ENCODE measurements at regions of chr3 and their contacts with region 1.

Region 1: DNA sequence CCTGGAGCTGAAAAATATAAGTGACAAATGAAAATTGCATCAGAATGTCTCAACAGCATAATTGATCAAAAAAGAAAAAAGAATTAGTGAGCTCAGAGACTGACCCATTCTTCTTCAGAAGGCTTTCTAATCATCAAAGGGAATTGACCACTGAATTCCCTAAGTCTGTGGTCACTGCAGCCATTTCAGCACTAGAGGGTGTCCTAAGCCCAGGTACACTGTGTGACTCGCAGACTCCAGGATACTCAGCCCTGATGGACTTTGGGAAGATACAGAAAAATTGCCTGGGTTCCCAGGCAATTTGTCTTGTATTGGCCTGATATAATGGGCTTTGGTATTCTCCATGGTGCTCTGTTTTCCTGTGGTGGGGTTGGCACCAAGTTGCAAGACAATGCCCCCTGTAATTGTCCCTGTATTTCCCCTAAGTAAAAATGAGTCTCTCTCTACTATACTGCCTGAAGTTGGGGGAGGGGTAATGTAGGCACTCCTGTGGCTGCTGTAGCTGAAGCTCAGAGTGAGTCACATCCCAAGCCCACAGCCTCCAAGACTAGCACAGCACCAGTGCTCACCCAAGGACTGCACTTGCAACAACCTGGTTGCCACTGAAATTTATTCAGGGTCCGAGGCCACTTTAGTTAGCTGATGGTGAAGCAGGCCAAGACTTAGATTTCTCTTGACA is 256.0 kb upstream of the STAC start:
- DNase-seq: peak; percentile 39 to 67
- ATAC-seq: peak; percentile 91 to 97
- H3K4me3 ChIP-seq: no peak overlapping the region
- H3K27ac ChIP-seq: 0 out of 6 replicates have a peak overlapping the region, but pooled peaks of 1 of the 2 experiments have one; percentile 26
- H3K4me1 ChIP-seq: no peaks in the 10 kb centered on the region
- CTCF ChIP-seq: peak; percentile 66
- EP300 ChIP-seq: no peak
- POLR2A ChIP-seq: no peak
- RAD21 ChIP-seq: peak; percentile 87

Region 2: DNA sequence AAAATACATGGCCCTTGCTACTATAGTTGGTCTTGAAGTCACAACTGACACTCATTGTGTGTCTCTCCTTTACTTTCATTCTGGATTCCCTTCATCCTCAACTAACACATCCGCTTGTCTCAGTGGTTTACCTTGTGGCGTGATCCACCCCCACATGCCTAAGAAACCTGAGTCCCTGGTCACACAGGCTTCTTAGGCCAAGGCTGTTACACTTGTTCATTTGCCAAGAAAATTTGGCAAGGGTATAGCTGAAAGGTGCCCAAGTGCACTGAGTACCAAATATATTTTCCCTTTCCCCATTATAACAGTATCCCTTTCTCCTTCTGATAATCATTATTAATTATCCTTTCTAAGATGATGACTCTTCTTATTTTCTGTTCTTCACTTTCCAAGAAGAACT is 48.4 kb after region 1 on chr3:
- CTCF ChIA-PET with region 1: no interaction called
- POLR2A ChIA-PET with region 1: no interaction called
- DNase-seq: no peak
- ATAC-seq: no peak
- H3K4me3 ChIP-seq: no peak overlapping the region
- H3K27ac ChIP-seq: no peak overlapping the region
- H3K4me1 ChIP-seq: no peaks in the 10 kb centered on the region
- CTCF ChIP-seq: no peak
- EP300 ChIP-seq: no peak
- POLR2A ChIP-seq: no peak
- RAD21 ChIP-seq: no peak

Region 3: GRCh38 chr3:36700537-36701248 is 576.4 kb after region 1 on chr3:
- CTCF ChIA-PET with region 1: interaction called, 20 read pairs
- POLR2A ChIA-PET with region 1: no interaction called
- DNase-seq: peak; percentile 47 to 72
- ATAC-seq: peak; percentile 87 to 93
- H3K4me3 ChIP-seq: no peak overlapping the region
- H3K27ac ChIP-seq: peak overlapping the region in 1 of 2 experiments; percentile 49; a peak in 1 of 6 replicates
- H3K4me1 ChIP-seq: peaks cover 13% of the 10 kb centered on the region
- CTCF ChIP-seq: peak; percentile 93
- EP300 ChIP-seq: no peak
- POLR2A ChIP-seq: no peak
- RAD21 ChIP-seq: peak; percentile 99

Region 4: GRCh38 chr3:36707623-36708409 is 583.6 kb after region 1 on chr3:
- CTCF ChIA-PET with region 1: interaction called, 14 read pairs
- POLR2A ChIA-PET with region 1: no interaction called
- DNase-seq: peak; percentile 90 to 93
- ATAC-seq: peak; percentile 96 to 99
- H3K4me3 ChIP-seq: no peak overlapping the region
- H3K27ac ChIP-seq: peak overlapping the region; percentile 73 to 81
- H3K4me1 ChIP-seq: peaks cover 18% of the 10 kb centered on the region
- CTCF ChIP-seq: peak; percentile 72
- EP300 ChIP-seq: peak in 1 of 2 experiments; percentile 20; a peak in 2 of 5 replicates
- POLR2A ChIP-seq: no peak
- RAD21 ChIP-seq: peak; percentile 84

Measured in A549 (cell line).